ENCODE measurements at regions of chr10 and their contacts with region 1.

Region 1: DNA sequence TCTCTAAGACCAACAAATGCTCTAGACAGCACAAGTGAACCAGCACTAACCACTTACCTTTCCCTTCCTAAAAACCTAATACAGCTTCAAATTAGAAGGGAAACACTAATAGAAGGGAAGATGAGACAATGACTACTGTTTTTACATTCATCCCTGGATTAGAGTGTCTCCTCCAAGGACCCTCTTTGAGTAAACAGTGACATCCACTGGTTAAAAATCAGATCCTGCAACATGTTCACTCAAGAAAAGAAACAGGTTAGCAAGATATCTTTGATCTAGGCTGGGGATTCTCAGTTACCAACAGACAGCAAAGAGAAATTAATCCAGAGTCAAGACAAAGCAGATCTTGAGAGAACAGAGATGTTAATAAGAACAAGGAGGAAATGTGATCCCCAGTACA is 177.7 kb upstream of the GHITM start:
- DNase-seq: no peak
- H3K4me3 ChIP-seq: no peak overlapping the region
- H3K27ac ChIP-seq: no peak overlapping the region
- H3K4me1 ChIP-seq: peaks cover 2 to 10% (median 4%) of the 10 kb centered on the region in 4 experiments; a peak in 5 of 7 replicates
- H3K27me3 ChIP-seq: peaks cover 0 to 20% (median 8%) of the 10 kb centered on the region in 4 experiments; a peak in 6 of 7 replicates
- CTCF ChIP-seq: peak in 2 of 3 experiments; percentile 32 to 39; a peak in 2 of 4 replicates
- EP300 ChIP-seq: no peak
- POLR2A ChIP-seq: no peak
- RAD21 ChIP-seq: peak; percentile 81 to 82

Region 2: GRCh38 chr10:83603708-83604107 is 357.9 kb before region 1 on chr10:
- CTCF ChIA-PET with region 1: no interaction called
- POLR2A ChIA-PET with region 1: no interaction called
- DNase-seq: no peak
- H3K4me3 ChIP-seq: no peak overlapping the region
- H3K27ac ChIP-seq: no peak overlapping the region
- H3K4me1 ChIP-seq: peaks cover 0 to 9% (median 3%) of the 10 kb centered on the region in 4 experiments; a peak in 5 of 7 replicates
- H3K27me3 ChIP-seq: no peaks in the 10 kb centered on the region
- CTCF ChIP-seq: no peak
- EP300 ChIP-seq: no peak
- POLR2A ChIP-seq: no peak
- RAD21 ChIP-seq: no peak

Region 3: GRCh38 chr10:83881661-83882060 is 80.0 kb before region 1 on chr10:
- CTCF ChIA-PET with region 1: interaction called, 85 read pairs
- POLR2A ChIA-PET with region 1: no interaction called
- DNase-seq: no peak
- H3K4me3 ChIP-seq: no peak overlapping the region
- H3K27ac ChIP-seq: no peak overlapping the region
- H3K4me1 ChIP-seq: no peaks in the 10 kb centered on the region
- H3K27me3 ChIP-seq: no peaks in the 10 kb centered on the region
- CTCF ChIP-seq: no peak
- EP300 ChIP-seq: no peak
- POLR2A ChIP-seq: no peak
- RAD21 ChIP-seq: no peak

Region 4: DNA sequence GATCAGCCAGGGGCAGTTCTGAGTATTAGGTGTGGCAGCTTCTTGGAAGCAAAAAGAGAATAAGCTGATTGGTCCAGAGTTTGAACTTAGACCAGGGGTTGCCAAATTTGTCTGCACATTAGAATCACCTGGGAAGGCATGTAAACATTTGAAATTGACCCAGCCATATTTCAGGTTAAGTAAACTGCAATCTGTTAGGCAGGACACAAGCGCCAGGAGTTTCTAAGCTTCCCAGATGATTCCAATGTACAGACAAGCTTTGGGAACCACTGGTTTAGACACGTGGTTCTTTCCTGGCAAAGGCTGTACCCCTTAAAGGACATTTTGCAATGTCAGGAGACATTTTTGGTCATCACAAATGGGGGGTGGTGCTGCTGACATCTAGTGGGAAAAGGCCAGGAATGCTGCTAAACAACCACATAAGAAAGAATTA is 17.2 kb after region 1 on chr10:
- CTCF ChIA-PET with region 1: interaction called, 47 read pairs
- POLR2A ChIA-PET with region 1: interaction called, 3 read pairs
- DNase-seq: no peak
- H3K4me3 ChIP-seq: no peak overlapping the region
- H3K27ac ChIP-seq: no peak overlapping the region
- H3K4me1 ChIP-seq: peaks cover 0 to 7% (median 3%) of the 10 kb centered on the region in 4 experiments; a peak in 2 of 7 replicates
- H3K27me3 ChIP-seq: no peaks in the 10 kb centered on the region
- CTCF ChIP-seq: peak in 2 of 3 experiments; percentile 7 to 31; a peak in 2 of 4 replicates
- EP300 ChIP-seq: no peak
- POLR2A ChIP-seq: no peak
- RAD21 ChIP-seq: peak; percentile 58 to 65

Measured in H1 (cell line).